HEK293T (cell line): ENCODE measurements at regions of chr7 and their contacts with region 1.

Region 1: DNA sequence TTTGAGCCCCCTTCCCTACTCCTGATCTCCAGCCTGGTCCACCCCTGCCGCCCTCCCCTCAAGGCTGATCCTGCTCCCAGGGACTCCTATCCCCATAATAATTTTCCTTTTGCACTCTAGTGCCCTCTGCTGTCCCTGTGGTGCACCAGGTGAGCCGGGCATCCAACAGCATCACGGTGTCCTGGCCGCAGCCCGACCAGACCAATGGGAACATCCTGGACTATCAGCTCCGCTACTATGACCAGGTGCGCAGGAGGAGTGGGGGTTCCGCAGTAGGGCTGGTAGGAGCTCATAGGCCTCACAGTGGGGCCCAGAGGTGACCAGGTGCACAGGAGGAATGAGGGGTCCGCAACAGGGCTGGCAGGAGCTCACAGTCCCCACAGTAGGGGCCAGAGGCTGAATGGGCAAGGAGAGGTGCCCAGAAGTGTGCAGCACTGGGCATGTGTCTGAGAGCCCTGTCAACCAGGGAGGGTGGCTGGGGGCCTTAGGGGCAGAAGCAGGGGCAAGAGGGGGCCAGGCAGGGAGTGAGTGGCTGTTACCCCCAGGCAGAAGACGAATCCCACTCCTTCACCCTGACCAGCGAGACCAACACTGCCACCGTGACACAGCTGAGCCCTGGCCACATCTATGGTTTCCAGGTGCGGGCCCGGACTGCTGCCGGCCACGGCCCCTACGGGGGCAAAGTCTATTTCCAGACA is 11.6 kb downstream of the EPHB6 start:
- DNase-seq: peak; percentile 68

Region 2: GRCh38 chr7:142880876-142881505 is 14.5 kb after region 1 on chr7:
- CTCF ChIA-PET with region 1: interaction called, 14 read pairs
- POLR2A ChIA-PET with region 1: no interaction called
- DNase-seq: peak; percentile 68